GM23248 (cell line): ENCODE measurements at regions of chr5 and their contacts with region 1.

Region 1: GRCh38 chr5:173293817-173294672 is 34.2 kb downstream of the STC2 start:
- DNase-seq: peak; percentile 87
- H3K4me3 ChIP-seq: peak overlapping the region; percentile 64
- H3K27ac ChIP-seq: no peak overlapping the region
- H3K4me1 ChIP-seq: peaks cover 10% of the 10 kb centered on the region; the same call in 1 of the 2 replicates
- H3K27me3 ChIP-seq: no peaks in the 10 kb centered on the region

Region 2: GRCh38 chr5:172772112-172772906 is 521.7 kb before region 1 on chr5:
- in situ Hi-C with region 1: no loop called
- DNase-seq: peak; percentile 98
- H3K4me3 ChIP-seq: peak overlapping the region; percentile 71
- H3K27ac ChIP-seq: peak overlapping the region; percentile 100
- H3K4me1 ChIP-seq: peaks cover 51% of the 10 kb centered on the region
- H3K27me3 ChIP-seq: no peaks in the 10 kb centered on the region

Region 3: DNA sequence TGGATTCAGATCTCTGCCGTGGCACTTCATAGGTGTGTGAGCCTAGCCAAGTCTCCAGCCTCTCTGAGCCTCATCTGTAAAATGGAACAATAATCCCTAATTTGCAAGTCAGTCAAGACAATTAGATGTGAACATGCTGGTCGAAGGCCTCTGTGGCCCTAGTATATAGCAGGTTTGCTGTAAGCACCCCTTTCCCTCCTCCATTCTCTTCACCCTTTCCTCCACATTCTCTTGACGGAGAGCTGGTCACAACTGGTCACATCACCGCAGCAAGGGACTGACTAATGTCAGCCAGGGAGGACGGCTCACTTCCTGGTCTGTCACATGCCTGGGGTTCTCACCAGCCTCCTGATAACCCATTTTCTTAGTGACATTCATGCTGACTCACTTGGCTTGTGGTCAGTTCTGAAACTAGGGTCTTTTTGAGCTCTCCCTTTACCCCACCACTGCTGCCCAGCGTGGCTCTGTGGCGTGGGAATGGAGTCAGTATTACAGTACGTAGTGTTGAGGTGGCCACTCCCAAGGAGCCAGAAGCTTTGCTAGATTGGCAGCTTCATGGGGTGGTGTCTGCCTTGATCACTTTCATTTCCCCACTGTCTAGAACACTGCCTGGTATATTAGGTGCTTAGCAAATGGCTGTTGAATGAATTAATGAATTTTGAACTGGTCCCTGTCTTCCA is 412.2 kb before region 1 on chr5:
- in situ Hi-C with region 1: no loop called
- DNase-seq: peak; percentile 78
- H3K4me3 ChIP-seq: no peak overlapping the region
- H3K27ac ChIP-seq: peak overlapping the region; percentile 73
- H3K4me1 ChIP-seq: peaks cover 24% of the 10 kb centered on the region
- H3K27me3 ChIP-seq: no peaks in the 10 kb centered on the region

Region 4: DNA sequence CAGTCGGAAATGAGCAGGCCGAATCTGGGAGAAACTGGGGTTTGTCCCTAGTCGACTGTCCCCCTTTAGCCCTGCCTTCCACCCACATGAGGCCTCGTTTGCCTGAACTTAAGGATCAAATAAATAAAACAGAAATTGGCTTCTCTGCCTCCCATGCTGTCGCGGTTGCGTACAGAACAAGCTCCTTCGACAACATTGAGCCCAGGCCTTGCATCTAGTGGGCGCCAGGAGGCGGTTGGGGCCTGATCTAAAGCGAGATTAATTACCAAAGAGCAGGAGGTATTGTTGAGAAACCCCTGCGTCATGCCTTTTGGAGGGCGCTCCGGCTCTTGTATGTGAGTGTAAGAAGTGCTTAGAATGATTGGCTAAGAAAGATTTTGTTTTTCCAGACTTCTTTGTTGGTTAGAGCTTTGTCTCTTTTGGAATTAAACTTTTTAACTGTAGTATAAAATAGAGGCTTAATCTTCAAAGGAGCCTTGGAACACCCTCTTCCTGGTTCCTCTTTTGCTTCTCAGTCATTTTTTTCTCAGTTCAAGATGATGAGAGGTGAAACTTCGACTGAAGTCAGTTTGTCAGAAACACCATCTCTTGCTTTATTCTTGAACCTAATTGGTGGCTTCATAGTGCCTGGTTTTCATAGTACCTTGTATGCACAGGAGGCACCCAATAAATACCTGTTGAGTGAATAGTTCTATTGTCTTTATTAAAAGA is 309.6 kb before region 1 on chr5:
- in situ Hi-C with region 1: loop called (anchors 25 kb)
- DNase-seq: peak; percentile 97
- H3K4me3 ChIP-seq: peak overlapping the region; percentile 86
- H3K27ac ChIP-seq: peak overlapping the region; percentile 92
- H3K4me1 ChIP-seq: peaks cover 12% of the 10 kb centered on the region
- H3K27me3 ChIP-seq: no peaks in the 10 kb centered on the region

Region 5: GRCh38 chr5:173144200-173145176 is 149.6 kb before region 1 on chr5 and contains the start of gene BNIP1:
- in situ Hi-C with region 1: no loop called
- DNase-seq: peak; percentile 93
- H3K4me3 ChIP-seq: peak within 1 kb of the TSS; percentile 90
- H3K27ac ChIP-seq: peak within 1 kb of the TSS; percentile 65
- H3K4me1 ChIP-seq: no peaks in the 10 kb centered on the region
- H3K27me3 ChIP-seq: no peaks in the 10 kb centered on the region
- total RNA-seq, gene BNIP1: 7.3 and 14.1 TPM in 2 replicates

Region 6: GRCh38 chr5:173331956-173332479 is 38.0 kb after region 1 on chr5:
- in situ Hi-C with region 1: loop called (anchors 5 kb)
- DNase-seq: peak; percentile 90
- H3K4me3 ChIP-seq: no peak overlapping the region
- H3K27ac ChIP-seq: no peak overlapping the region
- H3K4me1 ChIP-seq: peaks cover 20% of the 10 kb centered on the region
- H3K27me3 ChIP-seq: no peaks in the 10 kb centered on the region

Region 7: DNA sequence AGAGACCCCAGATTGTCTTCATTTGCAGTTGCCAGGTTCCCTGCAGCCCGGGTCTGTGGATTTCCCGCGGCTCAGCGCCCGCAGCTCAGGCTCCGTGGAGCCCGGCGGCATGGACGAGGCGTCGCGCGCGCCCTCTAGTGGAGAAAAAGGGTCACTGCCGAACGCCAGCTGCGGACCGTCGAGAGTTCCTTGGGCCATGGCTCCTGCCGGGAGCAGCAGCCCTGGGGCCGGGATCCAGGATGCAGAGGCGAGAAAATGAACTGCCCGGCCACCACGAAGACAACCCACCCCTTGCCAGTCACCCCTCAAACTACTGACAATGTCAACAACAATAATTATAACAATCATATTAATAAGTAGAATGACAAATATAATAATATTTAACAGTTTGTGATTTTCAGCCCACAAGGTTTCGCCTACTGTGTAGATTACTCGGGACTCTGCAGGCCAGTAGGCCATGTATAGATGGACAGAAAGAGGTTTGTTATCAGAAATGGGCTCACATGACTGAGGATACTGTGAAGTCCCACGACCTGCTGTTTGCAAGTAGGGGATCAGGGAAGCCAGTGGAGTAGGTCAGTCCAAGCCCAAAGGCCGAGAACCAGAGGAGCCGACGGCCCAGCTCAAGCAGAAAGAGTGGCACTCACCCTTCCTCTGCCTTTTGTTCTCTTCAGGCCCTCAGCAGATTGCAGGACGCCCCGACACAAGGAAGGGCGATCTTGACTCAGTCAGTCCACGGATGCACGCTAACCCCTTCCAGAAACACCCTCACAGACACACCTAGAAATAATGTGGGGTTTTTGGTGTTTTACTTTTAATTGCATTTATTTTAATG is 279.3 kb after region 1 on chr5:
- in situ Hi-C with region 1: loop called (anchors 10 kb)
- DNase-seq: peak; percentile 81
- H3K4me3 ChIP-seq: peak overlapping the region; percentile 62
- H3K27ac ChIP-seq: no peak overlapping the region
- H3K4me1 ChIP-seq: peaks cover 6% of the 10 kb centered on the region; the same call in 1 of the 2 replicates
- H3K27me3 ChIP-seq: no peaks in the 10 kb centered on the region